Posterior vena cava (tissue), 2 donors: ENCODE measurements at regions of chr9 and their contacts with region 1.

Region 1: GRCh38 chr9:18442629-18443491 is 31.1 kb upstream of the ADAMTSL1 start:
- DNase-seq: peak; percentile 87

Region 2: GRCh38 chr9:18122171-18122570 is 320.7 kb before region 1 on chr9:
- intact Hi-C with region 1: no loop called
- DNase-seq: no peak

Region 3: DNA sequence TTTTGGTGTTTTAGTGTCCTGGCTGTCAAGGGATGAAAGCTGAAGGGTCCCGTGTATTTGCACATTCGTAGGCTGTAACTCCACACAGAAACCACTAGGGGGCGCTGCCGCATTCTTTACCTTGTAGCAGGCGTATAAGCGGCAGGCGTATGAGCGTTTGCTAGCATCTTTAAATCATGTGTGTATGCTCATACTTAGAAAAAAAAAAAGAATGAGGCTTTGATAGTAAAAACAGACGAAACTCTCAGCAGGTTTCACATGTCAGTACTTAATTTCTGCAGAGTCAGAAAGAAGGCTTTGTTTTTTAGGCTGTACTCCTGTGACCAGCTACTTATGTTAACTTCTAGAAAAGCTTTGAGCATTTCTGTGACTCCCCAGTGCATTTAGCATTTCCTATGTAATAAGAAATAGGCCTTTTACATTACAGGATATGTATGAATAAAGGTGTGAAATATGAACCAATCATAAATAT is 187.7 kb before region 1 on chr9:
- intact Hi-C with region 1: loop called in 1 of 2 experiments (anchors 5 kb)
- DNase-seq: peak; percentile 93

Region 4: DNA sequence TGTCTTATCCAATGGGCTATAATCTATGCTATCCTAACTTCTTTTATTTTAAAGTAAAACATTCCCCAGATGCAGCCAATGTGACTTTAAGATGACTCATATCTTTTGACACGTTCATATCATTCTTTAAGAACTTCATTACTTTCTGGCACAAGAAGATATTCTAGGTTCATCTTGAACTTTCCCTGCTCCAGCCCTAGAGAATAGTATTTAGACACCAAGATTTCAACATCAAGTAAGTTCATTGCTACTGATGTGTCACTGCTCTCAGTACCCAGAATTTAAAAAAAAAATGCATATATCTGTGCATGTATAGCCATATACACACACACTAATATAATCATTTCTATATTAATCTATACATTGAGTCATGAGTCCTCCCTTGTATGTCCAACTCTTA is 414.9 kb after region 1 on chr9:
- intact Hi-C with region 1: loop called in 1 of 2 experiments (anchors 10 kb)
- DNase-seq: no peak